Activated CD4-positive, alpha-beta T cell treated with anti-CD3 and anti-CD28 coated beads for 36 hours (primary cell): ENCODE measurements at regions of chr9 and their contacts with region 1.

Region 1: GRCh38 chr9:86521977-86522376 is 167.8 kb upstream of the TUT7 start:
- DNase-seq: no peak
- ATAC-seq: no peak
- H3K4me3 Mint-ChIP-seq: no peak overlapping the region
- H3K27ac Mint-ChIP-seq: no peak overlapping the region
- H3K4me1 Mint-ChIP-seq: no peaks in the 10 kb centered on the region
- H3K27me3 Mint-ChIP-seq: peaks cover 6% of the 10 kb centered on the region

Region 2: DNA sequence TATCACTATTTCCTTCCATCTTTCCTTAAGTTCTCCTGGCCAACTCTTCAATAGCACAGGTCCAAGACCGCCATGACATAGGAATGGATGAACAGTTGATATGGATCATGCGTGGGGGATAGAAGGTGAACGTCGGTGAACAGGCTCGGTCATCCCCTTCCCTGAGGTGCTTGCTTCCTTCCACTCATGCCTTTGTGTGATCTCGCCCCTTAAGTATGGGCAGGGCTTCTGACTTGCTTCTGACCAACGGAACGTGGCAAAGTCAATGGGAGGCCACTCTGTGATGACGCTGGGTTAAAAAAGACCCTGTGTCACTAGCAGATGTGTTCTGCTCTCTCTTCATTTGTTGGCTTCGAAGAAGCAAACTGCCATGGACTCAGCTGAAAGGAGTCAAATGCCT is 72.7 kb after region 1 on chr9:
- CTCF ChIA-PET with region 1: no interaction called
- POLR2A ChIA-PET with region 1: no interaction called
- intact Hi-C with region 1: loop called in 1 of 2 experiments (anchors 2 kb)
- DNase-seq: no peak
- ATAC-seq: no peak
- H3K4me3 Mint-ChIP-seq: no peak overlapping the region
- H3K27ac Mint-ChIP-seq: no peak overlapping the region
- H3K4me1 Mint-ChIP-seq: no peaks in the 10 kb centered on the region
- H3K27me3 Mint-ChIP-seq: peaks cover 8% of the 10 kb centered on the region